Activated naive CD4-positive, alpha-beta T cell treated with anti-CD3 and anti-CD28 coated beads for 36 hours (primary cell): ENCODE measurements at regions of chr12 and their contacts with region 1.

Region 1: GRCh38 chr12:10364815-10365622 is 24.8 kb downstream of the KLRK1 start:
- DNase-seq: peak; percentile 72
- H3K4me3 Mint-ChIP-seq: no peak overlapping the region
- H3K27ac Mint-ChIP-seq: no peak overlapping the region
- H3K4me1 Mint-ChIP-seq: peaks cover 15% of the 10 kb centered on the region
- H3K27me3 Mint-ChIP-seq: no peaks in the 10 kb centered on the region

Region 2: GRCh38 chr12:10153271-10154144 is 211.5 kb before region 1 on chr12:
- CTCF ChIA-PET with region 1: no interaction called
- intact Hi-C with region 1: loop called (anchors 5 kb)
- DNase-seq: peak; percentile 66
- H3K4me3 Mint-ChIP-seq: peak overlapping the region; percentile 76
- H3K27ac Mint-ChIP-seq: peak overlapping the region; percentile 63
- H3K4me1 Mint-ChIP-seq: peaks cover 10% of the 10 kb centered on the region
- H3K27me3 Mint-ChIP-seq: peaks cover 18% of the 10 kb centered on the region

Region 3: GRCh38 chr12:10235761-10236631 is 129.0 kb before region 1 on chr12:
- CTCF ChIA-PET with region 1: interaction called, 5 read pairs
- intact Hi-C with region 1: loop called (anchors 5 kb)
- DNase-seq: peak; percentile 43
- H3K4me3 Mint-ChIP-seq: no peak overlapping the region
- H3K27ac Mint-ChIP-seq: no peak overlapping the region
- H3K4me1 Mint-ChIP-seq: no peaks in the 10 kb centered on the region
- H3K27me3 Mint-ChIP-seq: no peaks in the 10 kb centered on the region

Region 4: GRCh38 chr12:10320643-10321042 is 44.4 kb before region 1 on chr12:
- CTCF ChIA-PET with region 1: interaction called, 10 read pairs
- intact Hi-C with region 1: loop called (anchors 1 kb)
- DNase-seq: no peak
- H3K4me3 Mint-ChIP-seq: no peak overlapping the region
- H3K27ac Mint-ChIP-seq: peak overlapping the region; percentile 2
- H3K4me1 Mint-ChIP-seq: peaks cover 28% of the 10 kb centered on the region
- H3K27me3 Mint-ChIP-seq: no peaks in the 10 kb centered on the region

Region 5: GRCh38 chr12:10331642-10332239 is 33.3 kb before region 1 on chr12:
- CTCF ChIA-PET with region 1: no interaction called
- intact Hi-C with region 1: loop called (anchors 2 kb)
- DNase-seq: no peak
- H3K4me3 Mint-ChIP-seq: no peak overlapping the region
- H3K27ac Mint-ChIP-seq: no peak overlapping the region
- H3K4me1 Mint-ChIP-seq: no peaks in the 10 kb centered on the region
- H3K27me3 Mint-ChIP-seq: peaks cover 4% of the 10 kb centered on the region

Region 6: DNA sequence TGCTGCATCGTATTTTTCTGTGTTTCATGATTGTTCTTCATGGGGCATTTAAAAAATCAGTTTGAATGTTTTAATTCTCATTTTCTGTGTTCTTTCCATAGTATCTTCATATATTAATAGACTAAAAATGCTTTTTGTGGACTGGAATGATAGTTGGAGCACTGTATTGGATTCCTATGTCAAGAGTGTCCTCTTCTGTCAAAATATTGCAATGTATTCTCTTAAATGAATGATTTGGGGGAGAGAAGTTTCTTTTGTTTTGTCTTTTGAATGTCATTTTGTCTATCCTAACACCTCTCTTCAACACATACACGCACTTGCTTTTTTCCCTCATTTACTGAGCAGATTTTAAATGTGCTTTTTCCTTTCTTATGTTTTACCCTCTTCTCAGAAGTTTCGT is 136.0 kb after region 1 on chr12:
- CTCF ChIA-PET with region 1: no interaction called
- intact Hi-C with region 1: loop called (anchors 2 kb)
- DNase-seq: no peak
- H3K4me3 Mint-ChIP-seq: no peak overlapping the region
- H3K27ac Mint-ChIP-seq: no peak overlapping the region
- H3K4me1 Mint-ChIP-seq: peaks cover 16% of the 10 kb centered on the region
- H3K27me3 Mint-ChIP-seq: peaks cover 19% of the 10 kb centered on the region

Region 7: GRCh38 chr12:10562306-10562933 is 197.4 kb after region 1 on chr12:
- CTCF ChIA-PET with region 1: interaction called, 5 read pairs
- intact Hi-C with region 1: loop called (anchors 1 kb)
- DNase-seq: peak; percentile 36
- H3K4me3 Mint-ChIP-seq: no peak overlapping the region
- H3K27ac Mint-ChIP-seq: no peak overlapping the region
- H3K4me1 Mint-ChIP-seq: peaks cover 5% of the 10 kb centered on the region
- H3K27me3 Mint-ChIP-seq: peaks cover 15% of the 10 kb centered on the region

Region 8: DNA sequence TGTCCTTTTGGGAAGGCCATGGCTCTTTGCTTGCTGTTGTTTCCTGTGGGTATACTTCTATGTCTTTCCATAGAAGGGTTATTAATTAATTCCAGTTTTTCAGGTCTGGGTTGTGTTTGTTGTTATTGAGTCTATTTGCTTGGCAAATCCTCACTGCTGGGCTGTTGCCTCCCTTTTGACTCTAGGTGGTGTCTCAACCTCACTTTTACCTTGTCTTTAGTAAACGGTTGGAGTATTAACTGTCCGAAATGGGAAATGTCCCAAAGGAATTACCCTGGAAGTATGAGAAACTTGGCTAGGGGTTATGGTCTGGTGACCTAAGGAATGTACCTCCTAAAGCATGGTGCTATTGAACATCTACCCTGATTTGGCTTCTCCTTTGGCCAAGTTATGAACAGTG is 502.4 kb after region 1 on chr12:
- CTCF ChIA-PET with region 1: no interaction called
- intact Hi-C with region 1: no loop called
- DNase-seq: no peak
- H3K4me3 Mint-ChIP-seq: no peak overlapping the region
- H3K27ac Mint-ChIP-seq: no peak overlapping the region
- H3K4me1 Mint-ChIP-seq: no peaks in the 10 kb centered on the region
- H3K27me3 Mint-ChIP-seq: no peaks in the 10 kb centered on the region

Region 9: DNA sequence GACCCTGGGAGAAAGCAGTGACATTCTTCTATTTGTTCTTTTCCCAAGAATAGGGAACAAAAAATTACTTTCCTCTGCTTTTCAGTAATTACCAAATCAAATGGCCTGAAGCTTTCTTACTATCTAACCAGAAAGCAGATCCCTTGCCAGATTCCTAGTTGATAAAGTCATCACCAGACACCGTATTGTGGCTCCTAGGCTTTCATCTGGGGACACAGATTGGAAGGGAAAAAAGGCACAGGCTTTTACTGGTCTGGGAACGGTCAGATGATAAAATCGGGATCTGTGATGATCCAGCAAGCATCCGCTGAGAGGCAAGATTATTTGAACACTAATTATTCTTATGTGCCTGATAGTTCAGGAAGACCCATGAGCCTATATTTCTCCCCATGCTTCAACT is 1626.6 kb after region 1 on chr12:
- CTCF ChIA-PET with region 1: no interaction called
- intact Hi-C with region 1: no loop called
- DNase-seq: no peak
- H3K4me3 Mint-ChIP-seq: no peak overlapping the region
- H3K27ac Mint-ChIP-seq: no peak overlapping the region
- H3K4me1 Mint-ChIP-seq: peaks cover 2% of the 10 kb centered on the region
- H3K27me3 Mint-ChIP-seq: no peaks in the 10 kb centered on the region